BJ (cell line): ENCODE measurements at regions of chr6 and their contacts with region 1.

Region 1: DNA sequence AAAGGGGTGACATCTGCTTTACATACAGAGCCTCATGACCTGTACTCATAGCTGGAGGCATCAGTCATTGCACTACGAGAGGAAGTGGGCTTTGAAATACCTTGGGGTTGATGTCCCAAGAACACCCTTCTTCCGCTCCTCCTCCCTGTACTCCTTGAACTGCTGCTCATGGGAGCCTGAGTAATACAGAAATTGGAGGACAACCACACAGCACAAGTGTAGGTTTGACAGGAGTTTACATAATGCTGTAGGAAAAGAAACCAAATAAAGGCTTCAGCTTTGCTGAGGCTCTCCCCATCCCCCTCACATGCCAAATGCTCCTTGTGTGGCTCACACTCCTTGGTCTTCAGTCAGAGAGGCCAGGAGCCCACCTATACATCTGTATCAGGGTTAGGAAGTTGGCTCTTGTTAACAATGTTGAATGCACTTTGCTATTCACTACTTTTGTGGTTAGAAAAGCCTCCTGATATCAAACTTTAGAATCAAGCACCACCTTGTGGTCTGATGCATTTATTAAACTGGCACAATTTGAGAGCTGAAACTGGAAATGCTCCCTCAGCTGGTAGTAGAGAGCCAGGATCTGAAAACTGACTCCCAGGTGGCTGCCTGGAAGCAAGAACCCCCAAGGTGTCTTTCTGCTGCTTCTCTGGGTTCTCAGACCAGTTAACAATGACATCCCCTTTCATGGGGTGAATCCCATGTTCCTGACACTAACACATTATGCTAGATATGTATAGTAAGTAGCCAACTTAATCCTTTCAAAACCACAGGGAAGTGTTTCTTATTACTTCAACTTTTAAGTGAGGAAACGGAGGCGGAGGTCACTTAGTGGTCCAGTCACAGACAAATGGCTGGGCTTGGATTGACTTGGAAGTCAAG is 56.2 kb upstream of the EDN1 start:
- DNase-seq: peak; percentile 40
- H3K4me3 ChIP-seq: no peak overlapping the region
- H3K27me3 ChIP-seq: no peaks in the 10 kb centered on the region
- CTCF ChIP-seq: peak; percentile 86

Region 2: DNA sequence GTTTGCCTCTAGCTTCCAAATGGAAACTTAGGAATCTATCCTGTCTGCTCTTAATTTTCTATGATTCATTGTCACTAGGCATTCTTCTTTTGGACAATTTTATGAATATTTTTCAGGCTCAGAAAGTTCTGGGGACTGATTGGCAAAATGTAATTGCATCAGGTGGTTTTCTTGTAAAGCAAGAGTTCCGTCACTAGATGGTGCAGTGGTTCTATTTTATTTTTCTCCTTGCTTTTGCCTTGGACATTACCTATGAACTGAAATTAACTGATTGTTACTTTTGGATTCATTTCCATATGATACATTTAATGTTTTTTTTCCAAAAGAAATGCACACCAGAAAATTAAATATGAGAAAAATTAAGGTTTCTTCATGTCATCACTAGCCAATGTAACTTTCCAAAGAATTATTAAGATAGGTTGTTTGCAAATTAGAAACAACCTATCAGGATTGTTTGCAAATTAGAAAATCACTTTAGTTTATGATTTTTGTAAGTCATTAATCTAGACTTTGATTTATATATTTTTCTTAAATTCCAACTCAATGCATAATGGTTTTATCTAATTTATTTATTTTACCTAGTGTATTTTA is 648.4 kb before region 1 on chr6:
- CTCF ChIA-PET with region 1: interaction called, 12 read pairs
- POLR2A ChIA-PET with region 1: no interaction called
- DNase-seq: no peak
- H3K4me3 ChIP-seq: no peak overlapping the region
- H3K27me3 ChIP-seq: no peaks in the 10 kb centered on the region
- CTCF ChIP-seq: peak; percentile 55

Region 3: GRCh38 chr6:12245763-12246718 is 12.1 kb after region 1 on chr6:
- CTCF ChIA-PET with region 1: interaction called, 20 read pairs
- POLR2A ChIA-PET with region 1: no interaction called
- DNase-seq: no peak
- H3K4me3 ChIP-seq: no peak overlapping the region
- H3K27me3 ChIP-seq: no peaks in the 10 kb centered on the region
- CTCF ChIP-seq: no peak

Region 4: DNA sequence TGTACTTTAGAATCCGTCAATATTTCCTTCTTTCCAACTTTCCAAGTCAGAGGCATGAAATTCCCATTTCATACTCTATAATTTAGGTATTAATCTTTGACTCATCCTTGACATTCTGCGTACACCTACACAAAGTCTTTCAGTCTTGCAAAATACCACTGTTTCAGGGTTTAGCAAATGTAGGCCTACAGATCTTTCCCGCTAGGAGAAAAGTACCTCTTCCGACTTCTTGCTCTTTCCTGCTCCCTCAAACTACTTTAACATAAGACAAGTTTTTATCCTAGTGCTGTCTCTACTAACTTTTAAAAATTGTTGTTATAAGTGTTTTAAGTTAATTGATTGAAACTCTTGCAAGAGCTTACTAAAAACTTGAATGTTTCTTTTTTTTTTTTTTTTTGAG is 464.4 kb after region 1 on chr6:
- CTCF ChIA-PET with region 1: no interaction called
- POLR2A ChIA-PET with region 1: no interaction called
- DNase-seq: no peak
- H3K4me3 ChIP-seq: no peak overlapping the region
- H3K27me3 ChIP-seq: no peaks in the 10 kb centered on the region; the same call in 1 of the 2 replicates
- CTCF ChIP-seq: no peak